ENCODE measurements at regions of chr1 and their contacts with region 1.

Region 1: DNA sequence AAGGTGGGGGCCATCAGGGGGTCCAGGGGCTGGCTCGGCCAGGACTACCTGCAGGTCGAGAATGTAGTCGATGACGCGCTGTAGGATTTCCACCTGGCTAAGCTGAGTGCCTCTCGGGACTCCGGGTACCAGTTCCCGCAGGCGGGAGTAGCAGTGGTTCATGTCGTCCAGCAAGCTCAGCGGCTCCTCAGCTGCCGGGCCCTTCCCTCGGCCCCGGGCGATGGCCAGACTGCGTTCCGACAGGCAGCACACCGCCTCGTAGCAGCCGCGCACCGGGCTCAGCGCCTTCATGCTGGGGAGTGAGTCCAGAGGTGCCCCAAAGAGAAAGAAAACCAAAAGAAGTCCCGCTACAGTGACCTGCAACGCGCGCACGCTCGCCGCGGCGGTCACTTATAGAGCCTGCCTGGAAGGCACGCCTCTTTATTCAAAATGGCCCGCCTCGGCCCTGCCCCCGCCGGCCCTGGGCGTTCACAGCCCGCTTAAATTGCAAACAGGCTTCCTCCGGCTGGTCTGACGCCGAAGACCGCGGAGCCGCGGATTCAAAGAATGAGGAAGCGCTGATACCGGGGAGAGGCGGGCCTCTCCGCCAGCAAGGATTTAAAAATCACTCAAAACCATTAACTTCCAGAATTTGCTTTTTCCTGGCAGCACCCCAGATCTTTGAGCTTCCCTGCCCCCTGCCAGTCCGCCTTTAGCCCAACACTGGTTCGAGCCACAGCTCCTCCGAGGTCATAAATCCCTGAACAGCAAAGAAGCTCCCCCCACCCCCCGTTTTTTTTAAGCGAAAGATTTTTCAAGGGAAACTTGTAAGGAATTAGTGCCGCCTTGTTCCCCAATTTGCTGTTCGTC is at the start of gene ID3:
- DNase-seq: peak; percentile 96
- H3K4me3 Mint-ChIP-seq: peak within 1 kb of the TSS; percentile 84
- H3K27ac Mint-ChIP-seq: peak within 1 kb of the TSS; percentile 93
- H3K4me1 Mint-ChIP-seq: peaks cover 76% of the 10 kb centered on the region
- H3K27me3 Mint-ChIP-seq: peaks cover 33% of the 10 kb centered on the region
- total RNA-seq, gene ID3: 62.7 to 65.2 TPM

Region 2: GRCh38 chr1:23216771-23217420 is 342.5 kb before region 1 on chr1:
- CTCF ChIA-PET with region 1: no interaction called
- POLR2A ChIA-PET with region 1: no interaction called
- DNase-seq: no peak
- H3K4me3 Mint-ChIP-seq: no peak overlapping the region
- H3K27ac Mint-ChIP-seq: no peak overlapping the region
- H3K4me1 Mint-ChIP-seq: peaks cover 3% of the 10 kb centered on the region
- H3K27me3 Mint-ChIP-seq: peaks cover 63% of the 10 kb centered on the region

Region 3: GRCh38 chr1:23577056-23578004 is 18.0 kb after region 1 on chr1:
- CTCF ChIA-PET with region 1: interaction called, 4 read pairs
- POLR2A ChIA-PET with region 1: interaction called, 16 read pairs
- DNase-seq: peak; percentile 59
- H3K4me3 Mint-ChIP-seq: peak overlapping the region; percentile 51
- H3K27ac Mint-ChIP-seq: peak overlapping the region; percentile 90
- H3K4me1 Mint-ChIP-seq: peaks cover 46% of the 10 kb centered on the region
- H3K27me3 Mint-ChIP-seq: no peaks in the 10 kb centered on the region